ENCODE measurements at regions of chr21 and their contacts with region 1.

Region 1: DNA sequence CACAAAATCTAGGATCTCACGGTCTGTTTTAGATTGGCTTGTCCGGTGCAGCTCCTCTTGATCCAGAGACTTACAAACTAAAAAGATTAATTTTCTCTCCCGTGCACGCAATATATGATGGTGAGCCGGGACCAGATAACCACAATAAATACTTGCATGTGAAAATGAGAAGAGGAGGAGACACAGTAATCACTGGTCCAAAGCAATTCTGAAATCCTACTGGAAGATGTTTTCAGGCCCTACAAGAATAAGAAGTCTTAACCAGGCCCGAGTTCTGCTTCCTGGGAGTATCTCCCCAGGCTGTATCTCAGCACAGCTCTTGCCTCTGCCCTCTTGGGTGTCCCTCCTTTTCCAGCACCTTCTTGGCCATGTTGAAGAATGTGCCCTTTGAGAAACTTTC is 1.0 kb upstream of the WDR4 start:
- DNase-seq: no peak
- ATAC-seq: no peak
- H3K4me3 ChIP-seq: no peak overlapping the region
- H3K4me3 Mint-ChIP-seq: peak overlapping the region; percentile 88 to 96 (median 91)
- H3K27ac ChIP-seq: peak overlapping the region; percentile 97
- H3K27ac Mint-ChIP-seq: peak overlapping the region; percentile 92 to 95
- H3K4me1 ChIP-seq: peaks cover 9 to 25% of the 10 kb centered on the region in 2 experiments
- H3K4me1 Mint-ChIP-seq: peaks cover 23 to 32% (median 32%) of the 10 kb centered on the region in 3 donors
- H3K27me3 ChIP-seq: no peaks in the 10 kb centered on the region
- H3K27me3 Mint-ChIP-seq: no peaks in the 10 kb centered on the region

Region 2: DNA sequence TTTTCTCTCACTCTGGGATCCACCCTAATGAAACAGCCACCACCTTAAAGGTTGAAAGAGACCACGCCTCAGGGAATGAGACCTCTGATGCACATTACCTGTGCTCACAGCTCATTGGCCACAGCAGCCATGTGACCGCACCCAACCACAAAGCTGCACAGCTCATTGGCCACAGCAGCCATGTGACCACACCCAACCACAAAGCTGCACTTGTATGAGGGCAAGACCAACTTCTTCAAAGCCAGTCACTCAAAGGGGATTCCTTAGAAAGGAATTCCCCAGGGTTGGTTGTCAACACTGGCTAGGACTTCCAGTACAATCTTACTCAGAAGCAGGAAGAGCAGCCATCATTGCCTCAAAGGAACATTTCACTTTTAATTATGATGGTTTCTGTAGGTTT is 270.5 kb before region 1 on chr21:
- CTCF ChIA-PET with region 1: no interaction called
- POLR2A ChIA-PET with region 1: no interaction called
- DNase-seq: peak in 27 of 35 experiments; percentile 9 to 73 (median 31)
- ATAC-seq: peak in 2 of 4 experiments; percentile 12 to 72
- H3K4me3 ChIP-seq: no peak overlapping the region
- H3K4me3 Mint-ChIP-seq: no peak overlapping the region
- H3K27ac ChIP-seq: no peak overlapping the region
- H3K27ac Mint-ChIP-seq: no peak overlapping the region
- H3K4me1 ChIP-seq: peaks cover 6 to 12% of the 10 kb centered on the region in 2 experiments
- H3K4me1 Mint-ChIP-seq: peaks cover 7 to 15% (median 15%) of the 10 kb centered on the region in 3 donors
- H3K27me3 ChIP-seq: no peaks in the 10 kb centered on the region
- H3K27me3 Mint-ChIP-seq: no peaks in the 10 kb centered on the region

Region 3: DNA sequence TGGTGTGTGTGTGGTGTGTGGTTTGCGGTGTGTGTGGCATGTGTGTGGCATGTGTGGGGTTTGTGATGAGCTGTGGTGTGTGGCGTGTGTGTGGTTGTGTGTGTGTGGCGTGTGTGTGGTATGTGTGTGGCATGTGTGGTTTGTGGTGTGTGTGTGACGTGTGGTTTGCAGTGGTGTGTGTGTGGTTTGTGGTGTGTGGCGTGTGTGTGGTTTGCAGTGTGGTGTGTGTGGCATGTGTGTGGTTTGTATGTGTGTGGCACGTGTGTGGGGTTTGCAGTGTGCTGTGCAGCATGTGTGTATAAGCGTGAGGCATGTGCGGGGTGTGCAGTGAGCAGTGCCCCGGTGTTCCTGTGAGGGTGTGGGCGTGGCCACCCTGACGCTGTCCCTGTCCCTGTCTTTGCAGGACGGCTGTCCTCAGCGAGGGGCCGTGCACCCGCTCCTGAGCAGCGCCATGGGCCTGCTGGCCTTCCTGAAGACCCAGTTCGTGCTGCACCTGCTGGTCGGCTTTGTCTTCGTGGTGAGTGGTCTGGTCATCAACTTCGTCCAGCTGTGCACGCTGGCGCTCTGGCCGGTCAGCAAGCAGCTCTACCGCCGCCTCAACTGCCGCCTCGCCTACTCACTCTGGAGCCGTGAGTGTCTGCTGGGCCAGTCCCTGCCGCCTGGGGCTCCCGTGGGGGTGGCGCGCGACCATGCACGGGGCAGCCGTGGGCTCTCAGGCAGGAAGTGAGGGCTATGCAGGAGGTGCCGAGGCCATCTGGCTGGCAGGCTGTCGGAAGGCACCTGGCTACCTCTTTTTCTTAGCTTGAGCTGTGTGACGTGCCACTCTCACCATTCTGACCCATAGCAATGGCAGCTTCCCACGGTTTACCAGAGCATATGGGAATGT is 1079.1 kb after region 1 on chr21:
- CTCF ChIA-PET with region 1: no interaction called
- POLR2A ChIA-PET with region 1: interaction called in 1 of 2 experiments, 15 read pairs
- DNase-seq: peak in 3 of 35 experiments; percentile 9 to 30 (median 13)
- ATAC-seq: peak in 2 of 4 experiments; percentile 23 to 41
- H3K4me3 ChIP-seq: no peak overlapping the region
- H3K4me3 Mint-ChIP-seq: no peak overlapping the region
- H3K27ac ChIP-seq: no peak overlapping the region
- H3K27ac Mint-ChIP-seq: no peak overlapping the region
- H3K4me1 ChIP-seq: peaks cover 0 to 23% of the 10 kb centered on the region in 2 experiments
- H3K4me1 Mint-ChIP-seq: peaks cover 14 to 24% (median 19%) of the 10 kb centered on the region in 3 donors
- H3K27me3 ChIP-seq: no peaks in the 10 kb centered on the region
- H3K27me3 Mint-ChIP-seq: no peaks in the 10 kb centered on the region

Measured in T-cell (primary cell).